ENCODE measurements at regions of chr5 and their contacts with region 1.

Region 1: DNA sequence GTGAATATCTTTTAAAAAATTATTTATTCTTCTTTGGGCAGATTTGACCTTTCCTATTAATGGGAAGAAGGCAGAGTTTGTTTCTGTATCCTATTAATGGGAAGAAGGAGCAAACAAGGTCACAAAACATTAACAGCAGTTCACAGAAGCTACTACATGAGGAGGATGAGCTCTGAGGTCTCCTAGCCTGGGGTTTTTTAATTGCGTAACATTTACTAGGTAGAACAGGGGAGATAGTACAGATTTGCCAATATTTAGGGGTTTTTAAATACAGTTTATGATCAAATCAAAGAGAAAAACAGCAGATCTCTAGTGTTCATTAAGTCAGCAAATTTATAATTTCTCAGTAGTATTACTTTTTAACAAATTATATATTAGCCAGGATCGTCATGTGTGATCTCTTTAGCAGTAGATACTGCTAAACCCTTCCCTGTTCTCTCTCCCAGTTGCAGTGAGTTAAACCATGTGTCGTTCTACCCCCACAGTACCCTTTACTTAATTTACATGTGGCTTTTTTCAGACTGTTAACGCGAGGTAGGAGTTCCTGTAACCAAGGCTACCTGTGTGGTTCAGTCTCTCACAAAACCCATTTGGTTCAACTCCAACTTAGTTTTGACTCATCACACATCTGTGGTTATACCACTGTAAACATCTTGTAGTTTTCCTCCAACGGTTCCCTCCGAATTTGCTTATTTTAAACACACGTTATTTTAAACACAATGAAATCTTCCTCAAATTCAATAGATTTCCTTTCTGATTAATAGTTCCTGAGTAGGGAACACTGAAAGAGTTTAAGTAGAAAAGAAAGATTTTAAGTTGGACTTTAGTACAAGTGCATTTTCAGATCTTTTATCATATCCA is 13.3 kb downstream of the SLC25A46 start:
- DNase-seq: peak; percentile 50
- H3K4me3 Mint-ChIP-seq: peak overlapping the region; percentile 62
- H3K27ac Mint-ChIP-seq: peak overlapping the region; percentile 88
- H3K4me1 Mint-ChIP-seq: peaks cover 46% of the 10 kb centered on the region
- H3K27me3 Mint-ChIP-seq: no peaks in the 10 kb centered on the region

Region 2: DNA sequence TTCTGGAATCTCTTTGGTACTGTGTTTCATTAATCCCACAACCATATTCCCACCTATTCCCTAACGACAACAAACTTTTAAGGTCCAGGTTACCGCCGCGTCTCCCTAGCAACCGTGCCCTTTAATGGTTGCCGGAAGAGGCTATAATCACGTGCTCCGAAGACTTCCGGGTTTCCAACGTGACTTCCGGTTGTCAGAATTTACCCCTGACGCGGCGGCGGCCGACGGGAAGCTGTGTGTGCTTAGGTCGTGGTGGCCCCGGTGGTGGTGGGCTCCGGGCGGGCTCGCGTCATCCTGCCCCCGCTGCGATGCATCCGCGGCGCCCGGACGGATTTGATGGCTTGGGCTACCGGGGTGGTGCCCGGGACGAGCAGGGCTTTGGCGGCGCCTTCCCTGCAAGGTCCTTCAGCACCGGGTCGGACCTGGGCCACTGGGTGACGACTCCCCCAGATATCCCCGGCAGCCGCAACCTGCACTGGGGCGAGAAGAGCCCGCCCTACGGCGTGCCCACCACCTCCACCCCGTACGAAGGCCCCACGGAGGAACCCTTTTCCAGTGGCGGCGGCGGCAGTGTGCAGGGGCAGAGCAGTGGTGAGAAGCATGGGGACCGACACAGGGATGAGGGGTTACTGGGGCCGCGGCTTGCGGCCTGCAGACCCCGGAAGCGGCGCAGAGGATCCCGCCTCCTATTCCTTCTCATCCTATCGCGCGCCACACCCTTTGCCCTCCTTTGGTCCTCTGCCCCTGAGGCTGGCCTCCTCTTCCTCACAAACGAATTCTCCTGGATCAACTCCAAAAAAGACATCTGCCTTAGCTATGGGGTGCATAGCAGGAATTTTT is 13.1 kb before region 1 on chr5 and contains the start of gene SLC25A46:
- CTCF ChIA-PET with region 1: interaction called, 11 read pairs
- POLR2A ChIA-PET with region 1: interaction called, 4 read pairs
- intact Hi-C with region 1: loop called (anchors 1 kb)
- DNase-seq: peak; percentile 93
- H3K4me3 Mint-ChIP-seq: peak within 1 kb of the TSS; percentile 91
- H3K27ac Mint-ChIP-seq: peak within 1 kb of the TSS; percentile 84
- H3K4me1 Mint-ChIP-seq: peaks cover 34% of the 10 kb centered on the region
- H3K27me3 Mint-ChIP-seq: peaks cover 5% of the 10 kb centered on the region
- total RNA-seq, gene SLC25A46: 35.4 to 37.6 TPM

Region 3: GRCh38 chr5:111092062-111092853 is 340.1 kb after region 1 on chr5 and contains the start of gene WDR36:
- CTCF ChIA-PET with region 1: interaction called, 3 read pairs
- POLR2A ChIA-PET with region 1: no interaction called
- intact Hi-C with region 1: loop called (anchors 1 kb)
- DNase-seq: peak; percentile 93
- H3K4me3 Mint-ChIP-seq: peak within 1 kb of the TSS; percentile 92
- H3K27ac Mint-ChIP-seq: peak within 1 kb of the TSS; percentile 94
- H3K4me1 Mint-ChIP-seq: peaks cover 38% of the 10 kb centered on the region
- H3K27me3 Mint-ChIP-seq: peaks cover 3% of the 10 kb centered on the region
- total RNA-seq, gene WDR36: 43.5 to 44.1 TPM

Region 4: GRCh38 chr5:111229871-111230810 is 478.0 kb after region 1 on chr5:
- CTCF ChIA-PET with region 1: no interaction called
- POLR2A ChIA-PET with region 1: no interaction called
- intact Hi-C with region 1: loop called (anchors 2 kb)
- DNase-seq: no peak
- H3K4me3 Mint-ChIP-seq: peak overlapping the region; percentile 66
- H3K27ac Mint-ChIP-seq: peak overlapping the region; percentile 85
- H3K4me1 Mint-ChIP-seq: peaks cover 81% of the 10 kb centered on the region
- H3K27me3 Mint-ChIP-seq: no peaks in the 10 kb centered on the region

Region 5: DNA sequence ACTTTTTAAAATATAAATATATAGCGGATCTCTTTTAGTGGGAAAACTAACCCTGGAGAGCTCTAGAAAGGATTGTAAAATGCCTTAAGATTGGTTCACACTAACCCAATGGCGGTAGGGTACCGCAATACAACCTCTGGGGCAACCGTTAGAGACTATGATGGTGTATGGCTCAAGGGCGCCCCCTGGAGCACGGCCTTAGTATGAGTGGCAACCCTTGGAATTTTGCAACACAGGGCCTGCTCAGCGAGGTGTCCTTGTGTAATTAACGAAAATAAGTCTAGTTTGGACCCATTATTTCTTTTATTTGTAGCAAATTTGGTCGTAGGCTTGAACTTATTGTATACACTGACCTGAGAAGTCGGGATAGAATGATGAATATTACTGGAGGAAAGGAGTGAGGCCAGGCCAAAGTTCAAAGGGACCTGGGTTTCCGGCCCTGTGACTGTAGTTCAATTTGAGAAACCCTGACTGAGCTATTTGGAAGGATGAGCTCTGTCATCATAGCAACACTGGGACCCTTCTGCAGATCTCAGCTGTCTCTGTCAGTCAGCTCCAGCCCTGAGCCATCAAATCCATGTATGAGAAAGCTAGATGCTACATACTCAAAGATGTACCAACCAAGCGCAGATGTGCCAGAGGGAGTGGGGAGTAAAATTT is 526.8 kb after region 1 on chr5:
- CTCF ChIA-PET with region 1: interaction called, 4 read pairs
- POLR2A ChIA-PET with region 1: no interaction called
- intact Hi-C with region 1: loop called (anchors 1 kb)
- DNase-seq: peak; percentile 92
- H3K4me3 Mint-ChIP-seq: no peak overlapping the region
- H3K27ac Mint-ChIP-seq: no peak overlapping the region
- H3K4me1 Mint-ChIP-seq: peaks cover 60% of the 10 kb centered on the region
- H3K27me3 Mint-ChIP-seq: no peaks in the 10 kb centered on the region